Endothelial cell of umbilical vein (primary cell): ENCODE measurements at regions of chr2 and their contacts with region 1.

Region 1: DNA sequence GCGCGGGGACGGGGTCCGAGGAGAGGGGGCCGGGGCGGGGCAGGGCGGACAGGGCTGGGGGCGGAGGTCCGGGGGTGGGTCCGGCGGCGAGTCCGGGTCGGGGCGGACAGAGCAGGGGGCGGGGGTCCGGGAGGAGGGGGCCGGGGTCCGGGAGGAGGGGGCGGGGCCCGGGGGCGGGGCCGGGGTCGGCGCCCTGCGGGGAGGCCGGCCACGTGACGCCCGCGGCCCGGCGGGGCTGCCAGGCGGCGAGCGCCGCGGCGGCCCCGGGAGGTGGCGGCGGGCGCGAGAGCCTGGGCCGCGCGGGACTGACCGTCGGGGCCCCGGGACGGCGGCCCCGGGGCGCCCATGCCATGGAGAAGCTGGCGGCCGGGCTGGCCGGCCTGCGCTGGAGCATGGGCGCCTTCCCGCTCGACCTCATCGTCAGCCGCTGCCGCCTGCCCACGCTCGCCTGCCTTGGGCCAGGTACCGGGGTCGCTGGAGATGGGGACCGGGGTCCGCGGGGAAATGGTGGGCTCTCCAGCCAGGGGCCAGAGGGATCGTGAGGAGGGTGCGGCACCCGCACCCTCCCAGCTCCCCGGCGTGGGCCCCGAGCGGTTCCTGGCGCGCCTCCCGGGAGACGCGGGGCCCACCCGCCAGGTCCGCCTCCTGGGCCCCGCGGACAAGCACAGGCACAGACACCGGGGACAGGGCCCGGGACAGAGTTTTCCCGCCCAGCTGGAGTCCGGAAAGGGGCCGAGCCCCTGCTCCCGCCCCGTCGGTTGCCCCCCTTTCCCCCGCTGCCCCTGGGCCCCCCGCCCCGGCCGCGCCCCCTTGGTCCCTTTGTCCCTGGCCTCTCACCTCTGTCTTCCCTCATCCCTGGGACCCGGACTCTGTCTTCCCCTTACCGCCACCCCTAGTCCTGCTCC is at the start of gene GAREM2:
- DNase-seq: no peak
- H3K4me3 ChIP-seq: peak within 1 kb of the TSS in 1 of 3 experiments; percentile 15
- H3K27ac ChIP-seq: no peak within 1 kb of the TSS
- H3K4me1 ChIP-seq: no peaks in the 10 kb centered on the region
- H3K27me3 ChIP-seq: peaks cover 11 to 17% of the 10 kb centered on the region in 2 experiments
- CTCF ChIP-seq: no peak
- POLR2A ChIP-seq: no peak
- total RNA-seq, gene GAREM2: 3.1 and 4.5 TPM in 2 replicates

Region 2: GRCh38 chr2:25161055-25161781 is 1011.9 kb before region 1 on chr2:
- CTCF ChIA-PET with region 1: no interaction called
- POLR2A ChIA-PET with region 1: no interaction called
- dilution Hi-C with region 1: no loop called
- intact Hi-C with region 1: no loop called
- DNase-seq: peak; percentile 11
- H3K4me3 ChIP-seq: peak overlapping the region in 1 of 3 experiments; percentile 36
- H3K27ac ChIP-seq: no peak overlapping the region
- H3K4me1 ChIP-seq: no peaks in the 10 kb centered on the region
- H3K27me3 ChIP-seq: peaks cover 25 to 26% of the 10 kb centered on the region in 2 experiments
- CTCF ChIP-seq: no peak
- POLR2A ChIP-seq: no peak

Region 3: GRCh38 chr2:26184555-26185303 is 11.6 kb after region 1 on chr2:
- CTCF ChIA-PET with region 1: interaction called, 20 read pairs
- POLR2A ChIA-PET with region 1: no interaction called
- dilution Hi-C with region 1: no loop called
- intact Hi-C with region 1: no loop called
- DNase-seq: peak; percentile 86
- H3K4me3 ChIP-seq: peak overlapping the region; percentile 50 to 52 (median 51)
- H3K27ac ChIP-seq: no peak overlapping the region
- H3K4me1 ChIP-seq: peaks cover 3% of the 10 kb centered on the region
- H3K27me3 ChIP-seq: no peaks in the 10 kb centered on the region
- CTCF ChIP-seq: peak; percentile 70 to 84
- POLR2A ChIP-seq: peak; percentile 53